ENCODE measurements at regions of chr15 and their contacts with region 1.

Region 1: GRCh38 chr15:73732930-73733329 is 20.2 kb downstream of the INSYN1 start:
- DNase-seq: no peak
- ATAC-seq: no peak
- H3K4me3 Mint-ChIP-seq: no peak overlapping the region
- H3K27ac Mint-ChIP-seq: no peak overlapping the region
- H3K4me1 Mint-ChIP-seq: no peaks in the 10 kb centered on the region
- H3K27me3 Mint-ChIP-seq: peaks cover 7% of the 10 kb centered on the region
- CTCF ChIP-seq: no peak

Region 2: GRCh38 chr15:73593304-73594074 is 139.4 kb before region 1 on chr15:
- CTCF ChIA-PET with region 1: no interaction called
- POLR2A ChIA-PET with region 1: no interaction called
- intact Hi-C with region 1: no loop called
- DNase-seq: no peak
- ATAC-seq: no peak
- H3K4me3 Mint-ChIP-seq: no peak overlapping the region
- H3K27ac Mint-ChIP-seq: no peak overlapping the region
- H3K4me1 Mint-ChIP-seq: peaks cover 5% of the 10 kb centered on the region
- H3K27me3 Mint-ChIP-seq: no peaks in the 10 kb centered on the region
- CTCF ChIP-seq: no peak

Region 3: GRCh38 chr15:73748730-73749129 is 15.8 kb after region 1 on chr15:
- CTCF ChIA-PET with region 1: no interaction called
- POLR2A ChIA-PET with region 1: interaction called, 10 read pairs
- intact Hi-C with region 1: no loop called
- DNase-seq: no peak
- ATAC-seq: no peak
- H3K4me3 Mint-ChIP-seq: no peak overlapping the region
- H3K27ac Mint-ChIP-seq: no peak overlapping the region
- H3K4me1 Mint-ChIP-seq: peaks cover 2% of the 10 kb centered on the region
- H3K27me3 Mint-ChIP-seq: peaks cover 23% of the 10 kb centered on the region
- CTCF ChIP-seq: no peak